Activated CD4-positive, alpha-beta memory T cell treated with anti-CD3 and anti-CD28 coated beads for 36 hours (primary cell): ENCODE measurements at regions of chr18 and their contacts with region 1.

Region 1: GRCh38 chr18:63339920-63340484 is 20.4 kb upstream of the BCL2 start:
- DNase-seq: peak; percentile 37
- H3K4me3 Mint-ChIP-seq: no peak overlapping the region
- H3K27ac Mint-ChIP-seq: no peak overlapping the region
- H3K4me1 Mint-ChIP-seq: peaks cover 12% of the 10 kb centered on the region
- H3K27me3 Mint-ChIP-seq: no peaks in the 10 kb centered on the region

Region 2: DNA sequence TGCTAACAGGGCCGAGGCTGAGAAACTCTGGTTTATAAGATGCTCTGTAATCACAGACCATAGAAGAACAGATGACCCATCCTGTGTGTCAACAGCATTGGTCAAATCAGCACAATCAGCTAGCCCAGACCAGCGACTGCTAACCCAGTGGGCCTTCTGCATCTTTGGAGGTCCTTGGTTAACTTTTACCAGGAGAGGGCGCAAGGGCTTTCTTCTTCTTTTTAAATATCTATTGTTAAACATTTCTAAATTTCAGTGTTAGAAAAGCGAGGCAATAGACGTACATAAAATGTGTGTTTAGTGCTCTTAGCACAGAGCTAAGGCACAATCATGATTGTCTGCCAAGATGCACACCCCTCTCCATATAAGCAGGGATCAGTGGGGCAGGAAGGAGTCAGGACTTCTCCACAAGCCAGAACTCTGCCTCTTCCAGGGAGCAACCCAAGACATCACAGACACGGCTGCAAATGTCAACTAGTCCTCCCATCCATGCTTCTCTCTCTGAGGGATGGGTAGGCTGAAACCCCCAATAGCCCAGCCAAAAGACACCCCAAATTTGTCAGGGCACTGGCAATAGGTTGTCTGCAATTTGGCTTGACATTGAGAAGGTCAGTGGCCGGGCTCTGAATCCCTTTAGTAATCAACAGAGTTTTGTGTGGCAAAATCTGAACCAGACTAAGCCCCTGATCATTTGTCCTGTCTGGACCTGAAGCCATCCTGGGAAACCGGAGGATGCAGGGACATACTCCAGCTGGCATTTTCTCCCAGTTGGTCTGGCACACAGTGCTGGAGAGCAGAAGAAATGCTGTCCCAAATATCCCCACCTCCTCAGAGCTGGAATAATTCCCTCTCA is 208.7 kb before region 1 on chr18:
- CTCF ChIA-PET with region 1: interaction called, 10 read pairs
- POLR2A ChIA-PET with region 1: no interaction called
- intact Hi-C with region 1: no loop called
- DNase-seq: peak; percentile 64
- H3K4me3 Mint-ChIP-seq: no peak overlapping the region
- H3K27ac Mint-ChIP-seq: peak overlapping the region; percentile 65
- H3K4me1 Mint-ChIP-seq: peaks cover 30% of the 10 kb centered on the region
- H3K27me3 Mint-ChIP-seq: no peaks in the 10 kb centered on the region

Region 3: GRCh38 chr18:63505566-63506335 is 165.7 kb after region 1 on chr18:
- CTCF ChIA-PET with region 1: no interaction called
- POLR2A ChIA-PET with region 1: no interaction called
- intact Hi-C with region 1: loop called (anchors 2 kb)
- DNase-seq: peak; percentile 30
- H3K4me3 Mint-ChIP-seq: no peak overlapping the region
- H3K27ac Mint-ChIP-seq: no peak overlapping the region
- H3K4me1 Mint-ChIP-seq: no peaks in the 10 kb centered on the region
- H3K27me3 Mint-ChIP-seq: peaks cover 19% of the 10 kb centered on the region